ENCODE measurements at regions of chr1 and their contacts with region 1.

Region 1: DNA sequence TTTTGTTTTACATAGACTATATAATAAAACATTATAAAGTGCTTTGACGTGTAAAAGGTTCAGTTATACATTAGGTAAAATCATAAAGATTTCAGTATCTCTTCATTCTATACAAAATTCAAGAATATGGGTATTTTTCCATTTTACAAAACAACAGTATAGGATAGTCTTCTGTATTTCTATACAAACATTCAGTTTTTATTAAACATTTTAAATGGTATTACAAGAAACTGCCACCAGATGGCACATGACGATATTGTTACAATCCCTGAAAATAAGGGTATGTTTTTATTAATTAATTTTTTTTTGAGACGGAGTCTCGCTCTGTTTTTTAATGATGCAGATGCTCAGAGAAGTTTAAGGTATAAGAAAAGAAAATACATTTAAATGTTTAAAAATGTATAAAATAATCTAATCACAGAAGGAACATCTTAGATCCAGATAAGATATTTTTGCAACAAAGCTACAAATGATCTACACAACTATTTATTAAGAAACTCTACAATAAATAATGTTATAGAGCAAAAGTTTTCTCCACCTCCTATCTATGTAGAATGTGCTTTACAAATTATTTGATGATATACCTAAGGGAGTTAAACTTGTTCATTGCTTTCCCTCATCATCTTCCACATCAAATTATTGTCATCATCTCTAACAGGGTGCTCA is 23.5 kb upstream of the RSBN1 start:
- DNase-seq: no peak
- H3K4me3 Mint-ChIP-seq: no peak overlapping the region
- H3K27ac Mint-ChIP-seq: no peak overlapping the region
- H3K4me1 Mint-ChIP-seq: peaks cover 7% of the 10 kb centered on the region
- H3K27me3 Mint-ChIP-seq: no peaks in the 10 kb centered on the region

Region 2: GRCh38 chr1:113904674-113905434 is 69.1 kb after region 1 on chr1 and contains the starts of genes AP4B1 and DCLRE1B:
- intact Hi-C with region 1: loop called (anchors 1 kb)
- DNase-seq: peak; percentile 98
- H3K4me3 Mint-ChIP-seq: peak within 1 kb of the TSS; percentile 99
- H3K27ac Mint-ChIP-seq: peak within 1 kb of the TSS; percentile 95
- H3K4me1 Mint-ChIP-seq: peaks cover 58% of the 10 kb centered on the region
- H3K27me3 Mint-ChIP-seq: no peaks in the 10 kb centered on the region
- total RNA-seq, gene AP4B1: 36.3 and 40.9 TPM in 2 replicates
- total RNA-seq, gene DCLRE1B: 20.9 and 21.2 TPM in 2 replicates

Region 3: GRCh38 chr1:114178936-114179335 is 343.2 kb after region 1 on chr1:
- intact Hi-C with region 1: no loop called
- DNase-seq: no peak
- H3K4me3 Mint-ChIP-seq: no peak overlapping the region
- H3K27ac Mint-ChIP-seq: no peak overlapping the region
- H3K4me1 Mint-ChIP-seq: no peaks in the 10 kb centered on the region
- H3K27me3 Mint-ChIP-seq: no peaks in the 10 kb centered on the region

Region 4: GRCh38 chr1:114282751-114283403 is 447.1 kb after region 1 on chr1:
- intact Hi-C with region 1: loop called (anchors 1 kb)
- DNase-seq: peak; percentile 64
- H3K4me3 Mint-ChIP-seq: no peak overlapping the region
- H3K27ac Mint-ChIP-seq: no peak overlapping the region
- H3K4me1 Mint-ChIP-seq: no peaks in the 10 kb centered on the region
- H3K27me3 Mint-ChIP-seq: peaks cover 12% of the 10 kb centered on the region

Measured in activated T-helper 1 cell treated with anti-CD3 and anti-CD28 coated beads, Interleukin-12 subunit alpha, Interleukin-12 subunit beta, Interleukin-2, Interleukin-4 antibody, amounts not matched to agents 30 ng/mL and 10 ng/mL and 1 ng/mL, durations not matched to agents 14 hours and 24 hours and 36 hours (primary cell).